ENCODE measurements at regions of chr7 and their contacts with region 1.

Region 1: DNA sequence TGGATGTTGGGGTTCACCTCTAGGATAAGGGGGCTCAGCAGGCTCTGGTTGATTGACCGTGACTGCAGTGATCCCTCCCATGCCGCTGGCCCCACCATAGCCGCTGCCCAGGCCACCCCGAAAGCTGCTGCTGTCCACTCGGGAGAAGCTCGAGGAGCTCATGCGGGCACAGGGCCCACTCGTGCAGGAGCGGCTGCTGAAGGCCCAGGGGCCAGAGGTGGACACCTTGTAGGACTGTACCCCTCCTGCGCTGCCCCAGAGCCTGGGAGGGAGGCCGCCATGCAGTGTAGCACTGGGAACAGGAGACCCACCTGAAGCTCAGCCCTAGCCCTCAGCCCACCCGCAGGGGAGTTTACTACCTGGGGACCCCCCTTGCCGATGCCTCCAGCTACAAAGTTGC is 70.0 kb downstream of the CHRM2 start:
- DNase-seq: peak in 1 of 2 donors; percentile 10
- ATAC-seq: peak in 1 of 8 donors; percentile 54
- H3K4me3 ChIP-seq: no peak overlapping the region
- H3K27ac ChIP-seq: peak overlapping the region in 5 of 10 donors; percentile 29 to 82 (median 79)
- H3K4me1 ChIP-seq: peaks cover 0 to 36% (median 0%) of the 10 kb centered on the region in 9 donors
- H3K27me3 ChIP-seq: no peaks in the 10 kb centered on the region
- CTCF ChIP-seq: no peak

Region 2: DNA sequence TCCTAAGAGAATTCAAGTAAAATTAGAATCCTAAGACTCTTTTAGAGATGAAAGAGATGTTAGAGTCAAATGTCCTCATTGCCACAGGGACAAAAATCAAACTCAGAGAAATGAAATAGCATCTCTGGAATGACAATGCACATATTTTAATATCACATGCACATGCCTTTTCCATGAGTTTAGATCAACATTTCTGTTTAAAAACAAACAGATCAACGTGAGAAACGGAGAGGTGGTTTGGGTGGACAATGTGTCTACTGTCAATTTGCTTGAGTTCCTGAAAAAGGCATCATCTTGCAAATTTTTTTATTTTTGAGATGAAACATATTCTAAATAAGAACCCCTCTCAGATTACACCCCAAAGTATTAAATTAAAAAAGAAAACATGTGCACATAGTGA is 60.0 kb after region 1 on chr7:
- intact Hi-C with region 1: loop called in 1 of 10 experiments (anchors 10 kb)
- DNase-seq: no peak
- ATAC-seq: no peak
- H3K4me3 ChIP-seq: no peak overlapping the region
- H3K27ac ChIP-seq: peak overlapping the region in 7 of 10 donors; percentile 21 to 72 (median 57)
- H3K4me1 ChIP-seq: peaks cover 0 to 35% (median 4%) of the 10 kb centered on the region in 9 donors
- H3K27me3 ChIP-seq: no peaks in the 10 kb centered on the region
- CTCF ChIP-seq: no peak